GM13976 (cell line): ENCODE measurements at regions of chr2 and their contacts with region 1.

Region 1: GRCh38 chr2:199739413-199740110 is 111.4 kb downstream of the FTCDNL1 start:
- DNase-seq: peak; percentile 47
- CTCF ChIP-seq: peak; percentile 88

Region 2: GRCh38 chr2:199378948-199379650 is 360.5 kb before region 1 on chr2:
- in situ Hi-C with region 1: no loop called
- DNase-seq: no peak
- CTCF ChIP-seq: no peak

Region 3: GRCh38 chr2:199488772-199489400 is 250.7 kb before region 1 on chr2:
- in situ Hi-C with region 1: loop called (anchors 25 kb)
- DNase-seq: peak; percentile 65
- CTCF ChIP-seq: peak; percentile 61

Region 4: GRCh38 chr2:199631129-199631528 is 108.4 kb before region 1 on chr2:
- in situ Hi-C with region 1: no loop called
- DNase-seq: no peak
- CTCF ChIP-seq: no peak

Region 5: DNA sequence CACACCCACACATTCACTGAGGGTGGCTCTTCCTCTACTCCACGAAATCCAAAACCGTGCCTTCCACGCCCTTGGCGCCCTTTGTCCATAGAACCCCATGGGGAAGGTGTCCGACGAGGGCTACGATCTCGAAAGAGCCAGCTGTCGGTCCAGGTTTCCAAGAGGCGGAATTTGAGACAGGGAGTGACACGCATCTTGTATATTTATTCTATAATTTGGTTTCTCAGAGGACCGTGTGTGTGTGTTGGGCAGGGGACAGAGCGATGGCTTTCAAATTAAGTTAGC is 172.3 kb after region 1 on chr2:
- in situ Hi-C with region 1: no loop called
- DNase-seq: no peak
- CTCF ChIP-seq: no peak